Activated T-helper 1 cell treated with anti-CD3 and anti-CD28 coated beads, Interleukin-12 subunit alpha, Interleukin-12 subunit beta, Interleukin-2, Interleukin-4 antibody, amounts not matched to agents 30 ng/mL and 10 ng/mL and 1 ng/mL, durations not matched to agents 14 hours and 24 hours and 36 hours (primary cell): ENCODE measurements at regions of chr18 and their contacts with region 1.

Region 1: DNA sequence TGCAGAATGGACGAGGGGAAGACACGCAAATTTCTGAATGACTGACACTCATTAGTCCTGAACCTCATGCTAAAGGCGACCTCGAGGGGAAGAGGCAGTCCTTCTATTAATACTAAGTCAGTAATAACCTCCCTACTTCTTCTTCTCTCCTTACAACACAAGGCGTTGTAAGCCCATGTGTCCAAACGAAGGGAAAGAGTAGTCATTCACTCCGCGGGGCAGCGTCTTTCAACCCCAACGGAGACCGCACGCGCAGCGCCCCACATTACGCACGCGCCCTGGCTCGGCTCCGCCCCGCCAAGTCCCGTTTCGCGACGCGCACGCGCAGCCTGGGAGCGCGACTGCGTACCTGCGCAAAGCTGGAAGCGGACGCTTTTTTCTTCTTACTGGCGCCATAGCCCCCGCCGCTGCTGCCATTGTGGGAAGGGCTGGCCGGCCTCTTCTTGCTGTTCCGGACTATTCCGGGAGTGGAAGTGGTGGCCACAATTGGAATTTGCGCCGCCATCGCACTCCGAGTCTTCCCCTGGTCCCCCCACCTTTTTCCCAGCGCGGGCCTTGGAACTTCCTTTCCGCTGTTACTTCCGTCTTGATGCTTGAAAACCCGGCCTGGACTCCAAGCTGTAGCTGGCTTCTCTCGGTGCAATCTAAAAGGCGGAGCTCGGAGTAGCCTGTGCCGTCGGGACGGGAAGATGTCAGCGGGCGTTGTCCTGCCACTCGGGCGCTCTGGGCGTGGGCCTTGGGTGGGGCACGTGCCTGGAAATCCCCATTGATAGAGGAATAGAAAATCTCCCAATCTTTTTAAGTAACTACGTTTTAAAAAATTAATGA is at the start of gene INO80C:
- DNase-seq: peak; percentile 92
- H3K4me3 Mint-ChIP-seq: peak within 1 kb of the TSS; percentile 92
- H3K27ac Mint-ChIP-seq: peak within 1 kb of the TSS; percentile 98
- H3K4me1 Mint-ChIP-seq: peaks cover 44% of the 10 kb centered on the region
- H3K27me3 Mint-ChIP-seq: no peaks in the 10 kb centered on the region
- total RNA-seq, gene INO80C: 35.2 and 43.7 TPM in 2 replicates

Region 2: DNA sequence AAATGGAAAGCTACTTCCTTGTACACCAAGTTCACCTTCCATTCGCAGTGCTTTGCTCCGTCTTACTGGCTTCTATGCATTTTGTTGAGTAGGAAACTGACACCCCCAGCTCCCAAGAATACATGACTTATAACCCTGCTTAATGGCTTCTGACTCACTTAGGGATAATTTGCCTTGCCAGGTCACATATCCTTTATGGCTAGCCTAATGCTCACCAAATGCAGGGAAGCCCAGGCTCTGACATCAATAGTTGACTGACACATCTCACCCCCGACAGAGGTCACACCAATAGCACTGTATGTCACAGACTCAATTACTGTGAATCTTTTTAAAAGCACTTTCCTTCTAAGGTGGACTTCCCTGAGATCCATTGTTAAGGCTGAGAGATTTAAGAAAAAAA is 640.3 kb before region 1 on chr18:
- intact Hi-C with region 1: loop called (anchors 1 kb)
- DNase-seq: no peak
- H3K4me3 Mint-ChIP-seq: no peak overlapping the region
- H3K27ac Mint-ChIP-seq: no peak overlapping the region
- H3K4me1 Mint-ChIP-seq: peaks cover 7% of the 10 kb centered on the region
- H3K27me3 Mint-ChIP-seq: peaks cover 43% of the 10 kb centered on the region

Region 3: DNA sequence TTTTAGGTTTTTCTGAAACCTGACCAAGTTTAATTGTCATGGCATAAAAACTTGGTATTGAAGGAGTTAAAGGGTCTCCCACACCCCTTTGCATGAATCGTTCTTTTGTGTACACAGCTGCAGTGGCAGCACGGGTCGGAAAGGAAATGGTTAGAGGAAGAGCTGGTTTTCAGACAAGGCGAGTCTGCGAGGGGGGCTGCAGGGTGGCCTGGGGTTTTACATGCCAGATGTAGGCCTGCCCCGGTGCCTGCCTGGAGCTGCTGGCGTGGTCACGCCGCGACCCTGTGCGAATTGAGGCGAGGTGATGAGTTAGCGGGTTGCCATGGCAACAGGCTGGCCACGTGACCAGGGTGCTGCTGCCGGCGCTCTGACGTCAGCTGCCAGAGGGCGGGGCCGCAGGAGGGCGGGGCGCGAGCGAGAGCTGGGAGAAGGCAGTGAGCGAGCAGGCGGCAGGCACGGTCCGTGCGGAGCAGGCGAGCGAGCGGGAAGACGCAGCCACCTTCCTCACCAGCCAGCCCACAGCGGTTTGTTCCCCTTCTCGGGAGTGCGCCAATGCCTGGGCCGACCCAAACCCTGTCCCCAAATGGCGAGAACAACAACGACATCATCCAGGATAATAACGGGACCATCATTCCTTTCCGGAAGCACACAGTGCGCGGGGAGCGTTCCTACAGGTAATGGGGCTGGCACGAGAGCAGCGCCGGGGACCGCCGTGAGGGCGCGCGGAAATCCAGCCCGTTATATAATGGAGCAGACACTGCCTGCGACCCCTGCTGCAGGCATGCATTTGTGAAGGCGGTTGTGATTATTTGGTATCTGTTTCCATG is 456.4 kb before region 1 on chr18 and contains the start of gene MAPRE2:
- intact Hi-C with region 1: loop called (anchors 1 kb)
- DNase-seq: peak; percentile 98
- H3K4me3 Mint-ChIP-seq: peak within 1 kb of the TSS; percentile 96
- H3K27ac Mint-ChIP-seq: peak within 1 kb of the TSS; percentile 99
- H3K4me1 Mint-ChIP-seq: peaks cover 57% of the 10 kb centered on the region
- H3K27me3 Mint-ChIP-seq: no peaks in the 10 kb centered on the region
- total RNA-seq, gene MAPRE2: 50.7 TPM in 2 replicates

Region 4: DNA sequence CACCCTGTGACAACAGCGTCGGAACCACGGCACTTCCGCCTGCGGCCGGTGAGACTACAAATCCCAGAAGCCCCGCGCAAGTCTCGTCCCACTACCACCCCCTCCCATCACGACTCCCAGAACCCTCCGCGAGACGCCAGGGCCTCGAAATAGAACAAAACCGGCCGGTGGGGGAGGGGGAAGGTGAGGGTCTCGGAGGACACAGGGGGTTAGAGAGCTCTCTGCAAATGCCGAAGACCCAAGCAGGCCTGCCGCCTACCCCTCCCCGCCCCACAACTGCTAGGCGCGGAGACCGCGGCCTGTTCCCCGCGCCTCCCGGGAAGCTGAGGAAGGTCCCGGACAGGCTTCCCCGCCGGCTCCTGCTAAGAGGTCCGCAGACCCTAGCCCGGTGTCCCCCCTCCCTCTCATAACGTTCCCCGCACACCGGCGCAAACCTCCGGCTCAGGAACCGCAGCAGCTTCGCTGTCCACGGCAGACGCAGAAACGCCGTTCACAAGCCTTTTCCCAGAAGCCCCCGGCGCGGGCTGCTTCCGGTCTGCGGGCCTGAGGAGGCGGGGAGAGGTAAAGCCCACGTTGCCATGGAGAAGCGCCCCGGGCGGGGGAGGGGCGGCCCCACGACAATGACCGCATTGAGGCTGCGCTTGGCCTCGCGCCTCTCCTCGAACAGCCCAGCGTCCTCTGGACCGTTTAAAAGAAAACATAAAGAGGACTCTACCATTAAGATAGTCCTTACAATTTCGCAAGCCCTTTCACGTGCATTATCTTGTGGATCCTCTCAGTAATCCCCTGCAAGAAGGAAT is 153.4 kb before region 1 on chr18 and contains the start of gene ZNF24:
- intact Hi-C with region 1: loop called (anchors 1 kb)
- DNase-seq: peak; percentile 90
- H3K4me3 Mint-ChIP-seq: peak within 1 kb of the TSS; percentile 99
- H3K27ac Mint-ChIP-seq: peak within 1 kb of the TSS; percentile 98
- H3K4me1 Mint-ChIP-seq: peaks cover 38% of the 10 kb centered on the region
- H3K27me3 Mint-ChIP-seq: no peaks in the 10 kb centered on the region
- total RNA-seq, gene ZNF24: 56.4 and 56.6 TPM in 2 replicates

Region 5: GRCh38 chr18:35484034-35484433 is 13.6 kb before region 1 on chr18:
- intact Hi-C with region 1: loop called (anchors 1 kb)
- DNase-seq: no peak
- H3K4me3 Mint-ChIP-seq: no peak overlapping the region
- H3K27ac Mint-ChIP-seq: no peak overlapping the region
- H3K4me1 Mint-ChIP-seq: peaks cover 3% of the 10 kb centered on the region
- H3K27me3 Mint-ChIP-seq: no peaks in the 10 kb centered on the region

Region 6: DNA sequence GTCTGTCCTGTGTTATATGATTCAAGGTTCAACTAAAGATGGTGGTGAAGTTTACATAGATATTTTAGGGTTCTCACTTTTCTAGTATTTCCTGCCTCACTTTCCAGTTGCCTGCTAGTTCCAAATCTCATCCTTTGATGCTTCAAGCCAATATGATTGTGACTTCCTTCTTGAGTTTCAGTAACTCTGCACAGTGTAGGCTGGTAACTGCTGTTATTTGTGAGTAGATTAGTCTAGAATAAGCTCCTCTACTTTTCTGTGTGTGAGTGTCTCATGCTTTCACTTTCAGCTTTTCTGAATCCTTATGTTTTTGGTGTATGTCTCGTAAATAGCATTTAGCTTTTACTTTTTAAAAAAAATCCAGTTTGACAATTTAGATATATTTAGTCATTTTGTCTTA is 126.6 kb after region 1 on chr18:
- intact Hi-C with region 1: loop called (anchors 2 kb)
- DNase-seq: no peak
- H3K4me3 Mint-ChIP-seq: peak overlapping the region; percentile 23
- H3K27ac Mint-ChIP-seq: peak overlapping the region; percentile 67
- H3K4me1 Mint-ChIP-seq: peaks cover 39% of the 10 kb centered on the region
- H3K27me3 Mint-ChIP-seq: no peaks in the 10 kb centered on the region

Region 7: DNA sequence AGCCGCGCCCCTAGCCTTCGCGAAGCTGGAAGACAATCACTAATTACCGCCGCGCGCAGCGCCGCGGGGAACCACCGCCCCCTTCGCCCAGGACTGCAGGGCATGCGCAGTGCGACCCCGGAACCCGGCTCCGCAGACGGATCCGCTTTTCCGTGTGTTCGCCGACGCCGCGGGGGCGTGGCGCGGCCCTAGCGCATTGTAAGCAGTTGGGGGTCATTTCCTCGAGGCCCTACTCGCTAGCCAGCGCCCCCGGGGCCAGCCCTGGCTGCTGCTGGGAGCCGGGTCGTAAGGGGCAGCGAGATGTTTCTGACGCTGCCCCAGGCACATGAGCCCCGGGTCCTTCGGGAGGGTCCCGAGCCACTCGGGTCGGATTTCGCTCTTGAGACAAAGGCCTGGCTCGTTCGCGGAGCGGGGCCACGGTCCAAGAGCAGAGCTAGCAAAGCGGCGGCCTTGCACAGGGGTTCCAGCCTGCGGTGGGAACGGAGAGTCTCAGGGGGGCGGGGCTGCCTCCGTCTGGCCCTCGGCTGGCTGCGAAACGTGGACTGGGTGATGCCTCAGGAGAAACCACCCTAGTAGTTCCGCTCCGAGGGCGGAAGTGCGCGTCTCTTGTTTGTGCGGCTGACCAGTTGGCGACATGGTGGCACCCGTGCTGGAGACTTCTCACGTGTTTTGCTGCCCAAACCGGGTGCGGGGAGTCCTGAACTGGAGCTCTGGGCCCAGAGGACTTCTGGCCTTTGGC is 631.9 kb after region 1 on chr18 and contains the starts of genes ELP2 and SLC39A6:
- intact Hi-C with region 1: loop called (anchors 1 kb)
- DNase-seq: peak; percentile 93
- H3K4me3 Mint-ChIP-seq: peak within 1 kb of the TSS; percentile 89
- H3K27ac Mint-ChIP-seq: peak within 1 kb of the TSS; percentile 91
- H3K4me1 Mint-ChIP-seq: peaks cover 53% of the 10 kb centered on the region
- H3K27me3 Mint-ChIP-seq: no peaks in the 10 kb centered on the region
- total RNA-seq, gene ELP2: 97.1 and 104 TPM in 2 replicates
- total RNA-seq, gene SLC39A6: 53.5 and 54.4 TPM in 2 replicates